Caco-2 (cell line): ENCODE measurements at regions of chr18 and their contacts with region 1.

Region 1: GRCh38 chr18:158128-159036 is at the start of gene USP14:
- DNase-seq: peak; percentile 98 to 99
- H3K4me3 ChIP-seq: peak within 1 kb of the TSS; percentile 78
- H3K4me3 Mint-ChIP-seq: peak within 1 kb of the TSS; percentile 90
- H3K27ac Mint-ChIP-seq: peak within 1 kb of the TSS; percentile 93
- H3K4me1 ChIP-seq: peaks cover 15% of the 10 kb centered on the region; the same call in 1 of the 2 replicates
- H3K4me1 Mint-ChIP-seq: peaks cover 6% of the 10 kb centered on the region
- H3K27me3 ChIP-seq: no peaks in the 10 kb centered on the region
- H3K27me3 Mint-ChIP-seq: no peaks in the 10 kb centered on the region
- CTCF ChIP-seq: peak in 1 of 2 experiments; percentile 26
- total RNA-seq, gene USP14: 86.2 and 95.2 TPM in 2 replicates

Region 2: GRCh38 chr18:111292-112014 is 46.9 kb before region 1 on chr18:
- CTCF ChIA-PET with region 1: no interaction called
- POLR2A ChIA-PET with region 1: no interaction called
- intact Hi-C with region 1: loop called (anchors 5 kb)
- DNase-seq: peak; percentile 85 to 93
- H3K4me3 ChIP-seq: peak overlapping the region; percentile 53
- H3K4me3 Mint-ChIP-seq: peak overlapping the region; percentile 83
- H3K27ac Mint-ChIP-seq: peak overlapping the region; percentile 95
- H3K4me1 ChIP-seq: 0 out of 2 replicates have a peak, but pooled peaks cover 4% of the 10 kb centered on the region
- H3K4me1 Mint-ChIP-seq: no peaks in the 10 kb centered on the region
- H3K27me3 ChIP-seq: no peaks in the 10 kb centered on the region
- H3K27me3 Mint-ChIP-seq: no peaks in the 10 kb centered on the region
- CTCF ChIP-seq: no peak

Region 3: GRCh38 chr18:140670-141266 is 17.6 kb before region 1 on chr18:
- CTCF ChIA-PET with region 1: no interaction called
- POLR2A ChIA-PET with region 1: interaction called, 5 read pairs
- intact Hi-C with region 1: loop called (anchors 1 kb)
- DNase-seq: no peak
- H3K4me3 ChIP-seq: no peak overlapping the region
- H3K4me3 Mint-ChIP-seq: no peak overlapping the region
- H3K27ac Mint-ChIP-seq: no peak overlapping the region
- H3K4me1 ChIP-seq: peaks cover 11% of the 10 kb centered on the region; the same call in 1 of the 2 replicates
- H3K4me1 Mint-ChIP-seq: no peaks in the 10 kb centered on the region
- H3K27me3 ChIP-seq: no peaks in the 10 kb centered on the region
- H3K27me3 Mint-ChIP-seq: no peaks in the 10 kb centered on the region
- CTCF ChIP-seq: no peak

Region 4: GRCh38 chr18:434410-434809 is 276.0 kb after region 1 on chr18:
- CTCF ChIA-PET with region 1: no interaction called
- POLR2A ChIA-PET with region 1: no interaction called
- intact Hi-C with region 1: no loop called
- DNase-seq: peak in 1 of 2 experiments; percentile 21
- H3K4me3 ChIP-seq: no peak overlapping the region
- H3K4me3 Mint-ChIP-seq: no peak overlapping the region
- H3K27ac Mint-ChIP-seq: no peak overlapping the region
- H3K4me1 ChIP-seq: no peaks in the 10 kb centered on the region
- H3K4me1 Mint-ChIP-seq: no peaks in the 10 kb centered on the region
- H3K27me3 ChIP-seq: no peaks in the 10 kb centered on the region
- H3K27me3 Mint-ChIP-seq: no peaks in the 10 kb centered on the region
- CTCF ChIP-seq: no peak